ENCODE measurements at regions of chr7 and their contacts with region 1.

Region 1: DNA sequence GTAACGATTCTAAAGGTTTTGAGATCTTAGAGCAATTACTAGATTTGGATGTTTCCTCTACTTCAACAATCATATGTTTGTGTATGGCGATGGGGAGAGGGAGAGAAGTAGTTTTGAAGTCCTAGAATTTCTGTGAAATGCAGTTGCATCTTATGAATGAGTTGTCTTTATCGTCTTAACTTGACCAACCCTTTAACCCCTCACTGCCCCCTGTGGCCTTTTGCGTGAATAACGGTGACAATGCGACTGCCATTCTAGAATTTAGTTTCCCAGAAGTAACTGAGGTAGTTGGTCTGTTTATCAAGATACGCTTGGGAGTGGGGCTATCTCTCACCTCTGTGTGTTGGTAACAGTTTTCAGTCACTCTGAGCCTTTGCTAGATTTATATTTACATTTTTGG is 204.6 kb downstream of the HDAC9 start:
- DNase-seq: no peak
- H3K4me3 ChIP-seq: no peak overlapping the region
- H3K27ac ChIP-seq: peak overlapping the region in 1 of 2 experiments; percentile 100; a peak in 2 of 4 replicates
- H3K4me1 ChIP-seq: peaks cover 0 to 61% of the 10 kb centered on the region in 2 experiments; a peak in 3 of 4 replicates
- H3K27me3 ChIP-seq: no peaks in the 10 kb centered on the region
- CTCF ChIP-seq: peak; percentile 44
- EP300 ChIP-seq: no peak
- RAD21 ChIP-seq: no peak

Region 2: DNA sequence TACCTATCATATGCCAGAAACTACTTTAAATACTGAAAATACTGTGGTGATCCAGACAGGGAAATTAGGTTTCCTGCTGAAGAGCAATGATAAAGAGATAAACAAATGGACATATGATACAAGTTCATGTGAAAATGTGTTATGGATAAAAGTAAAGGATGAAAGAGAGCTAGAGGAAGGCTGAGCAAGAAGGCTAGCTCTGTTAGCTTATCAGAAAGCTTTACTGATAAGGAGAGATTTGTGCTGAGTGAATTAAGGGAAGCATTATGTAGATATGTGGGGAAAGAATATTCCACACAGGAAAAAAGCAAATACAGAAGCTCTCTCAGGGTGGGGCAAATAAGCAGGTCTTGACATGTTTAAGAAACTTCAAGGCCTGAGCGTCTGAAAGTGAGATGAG is 103.8 kb after region 1 on chr7:
- CTCF ChIA-PET with region 1: interaction called, 5 read pairs
- POLR2A ChIA-PET with region 1: interaction called, 10 read pairs
- DNase-seq: peak; percentile 48
- H3K4me3 ChIP-seq: no peak overlapping the region
- H3K27ac ChIP-seq: peak overlapping the region in 1 of 2 experiments; percentile 96; a peak in 2 of 4 replicates
- H3K4me1 ChIP-seq: peaks cover 0 to 32% of the 10 kb centered on the region in 2 experiments; a peak in 2 of 4 replicates
- H3K27me3 ChIP-seq: no peaks in the 10 kb centered on the region
- CTCF ChIP-seq: no peak
- EP300 ChIP-seq: peak; percentile 23 to 99; a peak in 2 of 4 replicates
- RAD21 ChIP-seq: peak; percentile 54

Measured in SK-N-SH (cell line).